HEK293 (cell line): ENCODE measurements at regions of chr7 and their contacts with region 1.

Region 1: GRCh38 chr7:149284850-149285626 is 23.0 kb downstream of the ZNF783 start:
- H3K4me3 ChIP-seq: peak overlapping the region; percentile 57
- H3K27ac ChIP-seq: no peak overlapping the region
- H3K4me1 ChIP-seq: no peaks in the 10 kb centered on the region
- CTCF ChIP-seq: peak; percentile 63; the same call in 1 of the 2 replicates

Region 2: GRCh38 chr7:149261829-149262617 is 23.0 kb before region 1 on chr7 and contains the start of gene ZNF783:
- CTCF ChIA-PET with region 1: interaction called, 7 read pairs
- POLR2A ChIA-PET with region 1: interaction called, 11 read pairs
- H3K4me3 ChIP-seq: peak within 1 kb of the TSS; percentile 56
- H3K27ac ChIP-seq: peak within 1 kb of the TSS; percentile 73
- H3K4me1 ChIP-seq: no peaks in the 10 kb centered on the region
- CTCF ChIP-seq: 0 out of 2 replicates have a peak, but pooled peaks have one; percentile 15